ENCODE measurements at regions of chr16 and their contacts with region 1.

Region 1: DNA sequence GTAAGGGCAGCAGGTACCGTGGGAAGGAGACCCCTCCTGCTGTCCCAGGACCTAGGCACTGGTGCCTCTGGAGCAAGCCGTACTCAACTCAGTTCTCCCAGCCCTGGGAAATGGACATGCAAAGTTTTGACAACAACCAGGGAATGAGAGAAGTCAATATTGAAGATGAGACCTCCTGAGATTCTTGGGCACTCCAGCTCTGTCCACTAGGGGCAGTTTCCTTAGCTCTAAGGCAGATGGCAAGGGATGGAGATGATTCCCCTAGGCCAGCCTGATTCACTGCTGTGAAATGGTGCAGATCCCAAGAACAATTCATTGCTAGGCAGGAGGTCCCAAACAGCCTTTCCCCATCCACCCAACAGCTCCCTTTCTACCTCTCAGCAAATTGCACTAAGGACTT is 20.6 kb upstream of the SDR42E2 start:
- DNase-seq: no peak
- ATAC-seq: no peak
- H3K4me3 Mint-ChIP-seq: no peak overlapping the region
- H3K27ac Mint-ChIP-seq: no peak overlapping the region
- H3K4me1 Mint-ChIP-seq: no peaks in the 10 kb centered on the region
- H3K27me3 Mint-ChIP-seq: no peaks in the 10 kb centered on the region

Region 2: GRCh38 chr16:22098405-22099255 is 43.1 kb before region 1 on chr16:
- CTCF ChIA-PET with region 1: interaction called, 6 read pairs
- POLR2A ChIA-PET with region 1: no interaction called
- intact Hi-C with region 1: loop called in 1 of 2 experiments (anchors 5 kb)
- DNase-seq: peak; percentile 13
- ATAC-seq: peak; percentile 87
- H3K4me3 Mint-ChIP-seq: no peak overlapping the region
- H3K27ac Mint-ChIP-seq: no peak overlapping the region
- H3K4me1 Mint-ChIP-seq: no peaks in the 10 kb centered on the region
- H3K27me3 Mint-ChIP-seq: peaks cover 6% of the 10 kb centered on the region

Region 3: DNA sequence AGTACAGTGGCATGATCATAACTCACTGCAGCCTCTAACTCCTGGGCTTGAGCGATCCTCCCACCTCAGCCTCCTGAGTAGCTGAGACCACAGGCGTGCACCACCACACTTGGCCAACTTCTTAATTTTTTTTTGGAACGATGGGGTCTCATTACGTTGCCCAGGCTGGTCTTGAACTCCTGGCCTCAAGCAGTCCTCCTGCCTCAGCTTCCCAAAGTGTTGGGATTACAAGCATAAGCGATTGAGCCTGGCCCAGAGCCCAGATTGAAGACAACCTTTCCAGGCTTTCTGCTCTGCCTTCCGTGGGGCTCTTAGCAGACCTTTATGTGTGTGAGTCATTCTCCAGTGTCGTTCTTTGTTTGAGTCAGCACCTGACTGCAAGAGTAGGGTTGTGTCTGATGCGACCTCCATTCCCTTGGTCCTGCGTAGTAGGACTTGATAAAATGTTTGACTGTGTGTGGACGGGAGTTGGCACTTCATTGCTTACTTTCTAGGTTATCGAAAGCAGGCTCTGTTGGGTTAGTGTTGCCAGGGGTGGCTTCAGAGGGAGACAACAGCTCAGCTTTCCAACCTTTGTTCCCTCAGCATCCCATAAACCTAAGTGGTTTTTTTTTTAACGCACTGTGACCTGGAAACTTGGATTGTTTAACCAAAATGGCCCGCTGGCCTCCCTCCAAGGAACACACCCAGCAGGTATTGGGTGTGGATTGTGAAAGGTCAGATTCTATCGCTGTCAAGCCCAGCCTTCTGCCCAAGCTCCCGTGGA is 90.7 kb after region 1 on chr16:
- CTCF ChIA-PET with region 1: no interaction called
- POLR2A ChIA-PET with region 1: no interaction called
- intact Hi-C with region 1: no loop called
- DNase-seq: peak; percentile 68
- ATAC-seq: peak; percentile 100
- H3K4me3 Mint-ChIP-seq: no peak overlapping the region
- H3K27ac Mint-ChIP-seq: peak overlapping the region; percentile 51
- H3K4me1 Mint-ChIP-seq: peaks cover 11% of the 10 kb centered on the region
- H3K27me3 Mint-ChIP-seq: no peaks in the 10 kb centered on the region

Region 4: GRCh38 chr16:22386976-22387375 is 245.2 kb after region 1 on chr16:
- CTCF ChIA-PET with region 1: no interaction called
- POLR2A ChIA-PET with region 1: no interaction called
- intact Hi-C with region 1: no loop called
- DNase-seq: no peak
- ATAC-seq: no peak
- H3K4me3 Mint-ChIP-seq: no peak overlapping the region
- H3K27ac Mint-ChIP-seq: no peak overlapping the region
- H3K4me1 Mint-ChIP-seq: peaks cover 2% of the 10 kb centered on the region
- H3K27me3 Mint-ChIP-seq: no peaks in the 10 kb centered on the region